ENCODE measurements at regions of chr1 and their contacts with region 1.

Region 1: DNA sequence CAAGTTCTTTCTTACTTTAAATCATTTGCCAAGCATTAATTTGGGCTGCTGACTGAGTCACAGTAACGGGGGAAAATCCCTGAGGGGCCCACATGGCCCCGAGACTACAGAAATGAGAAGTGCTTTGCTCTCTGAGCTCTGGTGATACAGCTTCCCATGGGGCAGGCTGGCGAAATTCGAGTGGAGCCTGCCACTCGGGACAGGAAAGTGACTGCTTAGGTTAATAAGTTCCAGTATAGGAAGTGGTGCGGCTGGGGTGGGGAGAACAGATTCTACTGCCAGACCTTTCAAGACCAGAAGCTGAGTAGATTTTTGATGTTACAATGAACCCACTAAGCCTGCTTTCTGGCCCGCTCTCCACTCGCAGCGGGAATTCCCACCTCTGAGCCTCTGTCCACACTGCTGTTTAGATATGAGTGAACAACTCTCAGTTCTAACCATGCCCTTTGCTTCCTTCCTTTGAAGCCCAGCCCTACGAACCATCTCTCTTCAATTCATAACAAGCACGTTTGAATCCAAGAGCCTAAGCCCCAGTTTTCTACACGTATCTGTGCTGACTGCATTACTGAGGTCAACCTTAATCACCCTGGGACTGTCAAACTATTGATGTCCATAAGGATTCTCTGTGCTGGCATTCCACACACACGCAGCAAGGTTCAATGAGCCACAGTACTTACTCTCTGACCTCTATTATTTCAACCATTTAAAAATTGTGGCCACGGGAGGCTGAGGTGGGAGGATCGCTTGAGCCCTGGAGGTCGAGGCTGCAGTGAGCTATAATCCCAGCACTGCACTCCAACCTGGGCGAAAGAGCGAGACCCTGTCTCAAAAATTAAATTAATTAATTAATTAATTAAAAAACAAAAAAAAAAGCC is 9.6 kb downstream of the ZBTB17 start:
- DNase-seq: peak; percentile 59
- H3K4me3 Mint-ChIP-seq: peak overlapping the region; percentile 77
- H3K27ac Mint-ChIP-seq: peak overlapping the region; percentile 99
- H3K4me1 Mint-ChIP-seq: peaks cover 63% of the 10 kb centered on the region
- H3K27me3 Mint-ChIP-seq: no peaks in the 10 kb centered on the region

Region 2: DNA sequence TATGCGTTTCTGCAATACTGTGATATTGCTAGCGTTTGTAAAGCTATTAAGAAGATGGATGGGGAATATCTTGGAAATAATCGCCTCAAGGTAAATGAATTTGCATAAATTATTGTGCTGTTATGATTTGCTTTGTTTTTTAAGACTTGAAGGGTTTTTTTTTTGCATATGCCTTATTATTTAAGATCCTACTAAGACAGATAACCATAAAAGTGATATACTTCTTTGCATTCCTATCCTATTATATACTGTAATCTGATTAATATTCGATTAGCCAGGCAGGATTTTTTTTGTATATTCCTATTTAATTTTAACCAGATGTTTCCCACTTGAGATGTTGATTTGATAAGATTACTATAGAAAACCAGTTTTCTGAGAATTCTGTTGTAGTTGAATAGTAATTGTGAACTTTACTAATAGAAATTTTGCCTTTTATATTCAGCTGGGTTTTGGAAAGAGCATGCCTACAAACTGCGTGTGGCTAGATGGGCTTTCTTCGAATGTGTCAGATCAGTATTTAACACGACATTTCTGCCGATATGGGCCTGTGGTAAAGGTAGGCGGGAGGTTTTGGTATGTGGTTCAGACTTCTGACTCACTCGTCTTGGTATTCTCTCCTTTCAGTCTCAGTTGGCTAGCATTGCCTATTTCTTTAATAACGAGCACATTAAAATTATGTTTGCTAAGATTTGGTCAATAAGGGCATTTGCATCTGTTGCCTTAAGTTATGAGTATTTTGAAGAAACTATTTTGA is 47.2 kb before region 1 on chr1:
- intact Hi-C with region 1: loop called (anchors 1 kb)
- DNase-seq: peak; percentile 56
- H3K4me3 Mint-ChIP-seq: peak overlapping the region; percentile 55
- H3K27ac Mint-ChIP-seq: peak overlapping the region; percentile 69
- H3K4me1 Mint-ChIP-seq: peaks cover 36% of the 10 kb centered on the region
- H3K27me3 Mint-ChIP-seq: no peaks in the 10 kb centered on the region

Region 3: DNA sequence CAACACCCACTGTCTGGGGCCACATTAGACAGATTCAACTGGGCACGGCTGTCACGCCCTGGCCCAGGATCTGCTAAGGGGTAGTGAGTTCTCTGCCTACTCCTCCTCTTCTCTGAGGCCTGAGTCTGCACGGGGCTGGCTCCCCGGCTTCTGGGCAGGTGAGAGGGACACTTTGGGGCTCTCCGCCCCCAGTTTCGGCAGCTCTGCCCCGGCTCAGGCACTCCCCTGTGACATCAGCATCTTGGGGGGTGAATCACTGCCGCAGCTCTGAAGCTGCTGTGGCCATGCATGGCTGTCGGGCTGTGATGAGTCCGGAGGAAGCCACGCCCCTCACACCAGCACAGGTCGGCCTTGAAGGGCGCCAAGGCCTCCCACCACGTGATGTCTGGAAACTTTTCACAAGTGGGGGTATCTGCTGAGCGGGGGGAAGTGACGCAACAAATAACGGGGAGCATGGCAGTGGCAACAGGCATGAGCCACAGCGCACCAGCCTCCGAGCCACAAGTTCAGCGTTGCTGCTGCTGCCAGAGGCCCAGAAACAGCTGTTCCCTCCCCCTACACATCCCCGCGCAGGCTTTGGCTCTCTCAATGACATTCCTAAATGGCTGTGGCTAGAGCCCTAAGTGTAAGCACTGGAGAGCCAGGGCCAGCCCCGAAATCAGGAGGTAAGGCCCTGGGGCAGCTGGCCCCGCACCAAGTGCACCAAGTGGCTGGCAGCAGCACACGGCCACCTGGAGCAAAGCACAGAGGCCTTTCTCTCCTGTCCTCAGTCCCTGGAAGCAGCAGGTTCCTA is 16.7 kb before region 1 on chr1:
- intact Hi-C with region 1: loop called (anchors 1 kb)
- DNase-seq: peak; percentile 45
- H3K4me3 Mint-ChIP-seq: peak overlapping the region; percentile 54
- H3K27ac Mint-ChIP-seq: peak overlapping the region; percentile 98
- H3K4me1 Mint-ChIP-seq: peaks cover 66% of the 10 kb centered on the region
- H3K27me3 Mint-ChIP-seq: no peaks in the 10 kb centered on the region

Region 4: GRCh38 chr1:15956150-15956549 is 10.2 kb before region 1 on chr1:
- intact Hi-C with region 1: loop called (anchors 1 kb)
- DNase-seq: no peak
- H3K4me3 Mint-ChIP-seq: no peak overlapping the region
- H3K27ac Mint-ChIP-seq: peak overlapping the region; percentile 71
- H3K4me1 Mint-ChIP-seq: peaks cover 71% of the 10 kb centered on the region
- H3K27me3 Mint-ChIP-seq: no peaks in the 10 kb centered on the region